Activated CD4-positive, alpha-beta T cell treated with anti-CD3 and anti-CD28 coated beads for 36 hours (primary cell): ENCODE measurements at regions of chr19 and their contacts with region 1.

Region 1: DNA sequence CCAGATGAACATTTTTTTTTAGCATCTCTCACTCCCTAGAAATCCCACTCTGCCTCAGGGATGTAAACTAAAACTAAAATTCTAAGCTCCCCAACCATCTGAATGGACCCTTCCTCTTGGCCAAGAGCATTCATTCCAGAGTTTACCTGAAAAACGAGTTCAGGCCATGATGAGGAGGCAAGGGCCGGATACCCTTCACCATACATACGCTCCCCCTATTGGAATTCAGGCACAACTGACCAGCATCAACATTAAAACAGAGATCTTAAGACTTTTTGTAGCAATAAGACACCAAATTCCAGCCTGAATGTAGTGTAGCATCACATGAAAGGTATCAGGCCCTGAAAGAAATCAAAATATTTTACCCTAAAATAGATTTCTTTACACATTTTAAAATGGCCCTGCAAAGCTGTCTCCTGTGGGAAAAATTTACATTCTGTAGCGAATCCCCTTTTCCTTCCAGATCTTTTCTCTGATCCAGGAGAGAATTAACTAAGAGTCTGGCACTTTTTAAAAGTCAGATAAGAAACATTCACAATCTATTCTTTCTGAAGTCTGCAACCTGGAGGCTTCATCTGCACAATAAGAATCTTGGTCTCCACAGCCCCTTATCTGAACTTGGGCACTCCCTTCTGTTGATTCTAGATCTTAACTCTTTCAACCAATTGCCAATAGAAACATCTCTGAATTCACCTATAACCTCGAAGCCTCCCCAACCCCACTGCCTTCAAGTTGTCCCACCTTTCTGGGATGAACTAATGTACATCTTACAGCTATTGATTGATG is 888.5 kb downstream of the UQCRFS1 start:
- DNase-seq: no peak
- ATAC-seq: no peak
- H3K4me3 Mint-ChIP-seq: no peak overlapping the region
- H3K27ac Mint-ChIP-seq: no peak overlapping the region
- H3K4me1 Mint-ChIP-seq: no peaks in the 10 kb centered on the region
- H3K27me3 Mint-ChIP-seq: no peaks in the 10 kb centered on the region

Region 2: DNA sequence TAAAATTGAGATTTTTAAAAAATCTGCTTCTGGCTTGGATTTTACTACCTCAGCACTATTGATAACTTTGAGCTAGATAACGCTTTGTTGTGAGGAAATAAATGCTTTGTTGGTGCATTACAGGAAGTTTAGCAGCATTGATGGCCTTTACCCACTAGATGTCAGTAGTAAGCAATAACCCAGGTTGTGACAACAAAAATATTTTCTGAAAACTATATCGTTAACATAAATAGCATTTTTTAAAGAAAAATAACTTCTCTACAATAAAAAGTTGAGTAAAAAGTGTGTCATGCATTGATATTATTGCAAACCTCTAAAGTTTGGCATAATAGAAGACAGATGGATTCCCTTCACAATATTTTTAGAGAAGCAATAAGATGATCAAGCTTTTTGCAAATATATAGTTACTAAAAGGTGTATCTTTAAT is 358.1 kb before region 1 on chr19:
- CTCF ChIA-PET with region 1: interaction called, 5 read pairs
- POLR2A ChIA-PET with region 1: no interaction called
- intact Hi-C with region 1: loop called (anchors 1 to 2 kb)
- DNase-seq: no peak
- ATAC-seq: no peak
- H3K4me3 Mint-ChIP-seq: no peak overlapping the region
- H3K27ac Mint-ChIP-seq: no peak overlapping the region
- H3K4me1 Mint-ChIP-seq: no peaks in the 10 kb centered on the region
- H3K27me3 Mint-ChIP-seq: no peaks in the 10 kb centered on the region

Region 3: DNA sequence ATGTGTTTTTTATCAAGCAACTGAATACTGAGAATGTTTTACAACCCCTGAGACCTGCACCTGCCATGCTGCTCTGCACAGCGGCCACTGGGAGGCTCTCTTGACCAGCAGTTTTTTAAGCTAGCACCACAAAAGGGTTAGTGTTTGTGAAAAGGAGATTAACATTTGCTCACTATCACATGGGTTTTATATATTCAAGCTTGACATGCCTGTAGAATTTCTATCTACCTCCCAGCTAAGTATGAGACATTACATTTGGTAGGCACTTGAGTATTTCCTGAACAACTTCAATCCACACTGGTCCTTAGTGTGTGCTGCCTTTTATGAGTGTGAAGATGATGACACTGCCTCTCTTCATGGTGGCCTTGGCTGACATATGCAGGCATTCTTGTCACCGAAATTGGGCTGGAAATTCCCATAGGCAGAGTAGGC is 350.4 kb before region 1 on chr19:
- CTCF ChIA-PET with region 1: interaction called, 3 read pairs
- POLR2A ChIA-PET with region 1: no interaction called
- intact Hi-C with region 1: loop called in 1 of 2 experiments (anchors 2 kb)
- DNase-seq: peak; percentile 47
- ATAC-seq: no peak
- H3K4me3 Mint-ChIP-seq: no peak overlapping the region
- H3K27ac Mint-ChIP-seq: no peak overlapping the region
- H3K4me1 Mint-ChIP-seq: no peaks in the 10 kb centered on the region
- H3K27me3 Mint-ChIP-seq: no peaks in the 10 kb centered on the region

Region 4: DNA sequence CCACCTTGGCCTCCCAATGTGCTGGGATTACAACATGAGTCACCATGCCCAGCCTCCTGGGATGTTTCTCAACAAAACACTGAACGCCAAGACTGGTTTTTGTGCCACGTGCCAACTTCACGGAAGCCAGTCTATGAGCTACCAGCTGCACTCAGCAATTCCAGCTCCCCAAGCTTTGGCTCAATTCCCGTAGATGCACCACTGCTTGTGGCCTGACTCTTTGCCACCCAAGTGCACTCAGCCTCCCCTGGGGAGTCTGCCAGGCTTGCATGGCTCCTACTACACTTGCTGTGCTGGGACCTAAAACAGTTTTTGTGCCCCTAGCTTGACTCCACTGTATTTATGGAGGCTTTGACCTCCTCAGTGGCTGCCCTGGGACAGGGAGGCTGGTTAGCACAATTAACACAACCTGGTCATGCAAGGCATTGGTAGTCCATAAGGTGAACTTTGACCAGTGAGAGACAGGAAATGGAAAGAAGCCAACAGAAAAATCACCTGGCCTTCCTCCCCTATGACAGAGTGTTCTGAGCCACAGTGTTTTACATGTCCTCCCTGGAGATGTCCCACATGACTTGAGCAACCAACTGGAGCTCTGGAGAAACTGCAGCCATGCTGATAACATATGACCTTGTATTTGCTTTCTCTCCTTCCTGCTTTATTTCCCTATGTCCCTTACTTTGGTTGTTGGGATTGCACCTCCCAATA is 284.6 kb before region 1 on chr19:
- CTCF ChIA-PET with region 1: no interaction called
- POLR2A ChIA-PET with region 1: no interaction called
- intact Hi-C with region 1: no loop called
- DNase-seq: no peak
- ATAC-seq: no peak
- H3K4me3 Mint-ChIP-seq: no peak overlapping the region
- H3K27ac Mint-ChIP-seq: no peak overlapping the region
- H3K4me1 Mint-ChIP-seq: no peaks in the 10 kb centered on the region
- H3K27me3 Mint-ChIP-seq: no peaks in the 10 kb centered on the region

Region 5: DNA sequence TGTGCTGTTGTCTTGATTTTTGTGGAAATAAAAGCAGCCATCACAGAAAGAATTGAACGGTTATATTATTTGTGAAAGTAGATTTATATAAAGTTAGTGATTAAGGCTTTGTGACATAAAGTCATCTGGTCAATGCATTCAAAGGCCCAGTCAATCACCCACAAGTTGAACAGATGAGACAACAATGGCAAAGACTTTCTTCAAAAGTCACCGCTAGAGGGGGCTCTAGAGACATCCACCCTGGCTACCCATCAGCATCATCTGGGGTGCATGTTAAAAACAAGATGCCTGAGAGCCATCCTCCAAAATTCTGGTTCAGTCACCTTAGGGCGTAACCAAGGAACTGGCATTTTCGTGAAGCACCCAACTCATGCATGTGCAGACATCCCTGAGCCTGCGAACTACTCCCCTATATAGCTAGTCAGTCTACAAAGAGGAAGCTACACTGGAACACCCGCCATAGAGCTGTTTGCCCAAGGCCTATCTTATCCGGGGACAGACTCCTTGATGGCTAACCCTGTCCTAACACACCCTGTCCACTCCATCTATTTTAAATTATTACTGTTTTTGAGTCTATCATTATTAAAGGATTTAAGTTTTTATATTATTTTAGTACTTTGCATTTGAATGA is 82.1 kb before region 1 on chr19:
- CTCF ChIA-PET with region 1: interaction called, 4 read pairs
- POLR2A ChIA-PET with region 1: no interaction called
- intact Hi-C with region 1: loop called (anchors 1 to 2 kb)
- DNase-seq: peak; percentile 42
- ATAC-seq: no peak
- H3K4me3 Mint-ChIP-seq: no peak overlapping the region
- H3K27ac Mint-ChIP-seq: no peak overlapping the region
- H3K4me1 Mint-ChIP-seq: no peaks in the 10 kb centered on the region
- H3K27me3 Mint-ChIP-seq: no peaks in the 10 kb centered on the region

Region 6: DNA sequence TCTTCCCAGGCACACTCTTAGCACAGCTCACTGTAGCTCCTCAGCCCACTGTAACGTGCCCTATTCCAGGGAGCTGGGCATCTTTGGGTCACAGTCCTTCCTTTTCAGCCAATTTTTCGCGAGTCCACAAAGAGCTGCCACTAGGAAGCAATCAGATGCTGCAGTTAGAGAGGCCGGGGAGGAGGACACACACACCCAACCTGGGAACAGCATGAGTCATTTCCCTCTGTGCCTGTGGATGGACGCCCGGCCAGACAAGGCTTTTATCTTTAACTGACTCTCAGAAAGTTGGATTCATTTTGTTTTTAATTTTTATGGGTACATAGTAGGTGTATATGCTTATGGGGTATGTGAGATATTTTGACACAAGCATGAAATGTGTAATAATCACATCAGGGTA is 30.1 kb before region 1 on chr19:
- CTCF ChIA-PET with region 1: no interaction called
- POLR2A ChIA-PET with region 1: no interaction called
- intact Hi-C with region 1: no loop called
- DNase-seq: no peak
- ATAC-seq: no peak
- H3K4me3 Mint-ChIP-seq: no peak overlapping the region
- H3K27ac Mint-ChIP-seq: no peak overlapping the region
- H3K4me1 Mint-ChIP-seq: no peaks in the 10 kb centered on the region
- H3K27me3 Mint-ChIP-seq: peaks cover 3% of the 10 kb centered on the region